Dorsolateral prefrontal cortex (tissue), 120 donors: ENCODE measurements at regions of chr6 and their contacts with region 1.

Region 1: GRCh38 chr6:73520688-73521350 is at the start of gene EEF1A1:
- DNase-seq: peak; percentile 96 to 100 (median 99)
- H3K4me3 ChIP-seq: peak within 1 kb of the TSS; percentile 64 to 100 (median 94)
- H3K27ac ChIP-seq: peak within 1 kb of the TSS; percentile 95 to 100 (median 100)
- H3K27me3 ChIP-seq: no peaks in the 10 kb centered on the region
- CTCF ChIP-seq: peak in 7 of 56 donors; percentile 2 to 25 (median 11)
- total RNA-seq, gene EEF1A1: 1,645 to 3,337 (median 2,206) TPM

Region 2: DNA sequence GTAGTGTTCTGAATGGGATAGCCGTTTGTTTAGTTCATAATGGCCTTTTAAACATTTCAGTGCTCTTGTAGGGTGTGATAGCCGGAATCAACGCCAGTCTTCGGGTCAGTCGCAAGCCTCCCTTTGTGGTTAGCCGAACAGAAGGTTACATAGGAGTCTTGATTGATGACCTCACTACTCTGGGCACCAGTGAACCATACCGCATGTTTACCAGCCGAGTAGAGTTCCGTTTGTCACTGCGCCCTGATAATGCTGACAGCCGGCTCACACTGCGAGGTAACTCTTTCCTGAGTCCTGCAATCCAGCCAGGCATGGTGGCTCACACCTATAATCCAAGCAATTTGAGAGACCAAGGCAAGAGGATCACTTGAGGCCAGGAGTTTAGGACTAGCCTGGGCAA is 38.9 kb before region 1 on chr6:
- intact Hi-C with region 1: no loop called
- DNase-seq: no peak
- H3K4me3 ChIP-seq: no peak overlapping the region
- H3K27ac ChIP-seq: no peak overlapping the region
- H3K27me3 ChIP-seq: no peaks in the 10 kb centered on the region
- CTCF ChIP-seq: no peak

Region 3: DNA sequence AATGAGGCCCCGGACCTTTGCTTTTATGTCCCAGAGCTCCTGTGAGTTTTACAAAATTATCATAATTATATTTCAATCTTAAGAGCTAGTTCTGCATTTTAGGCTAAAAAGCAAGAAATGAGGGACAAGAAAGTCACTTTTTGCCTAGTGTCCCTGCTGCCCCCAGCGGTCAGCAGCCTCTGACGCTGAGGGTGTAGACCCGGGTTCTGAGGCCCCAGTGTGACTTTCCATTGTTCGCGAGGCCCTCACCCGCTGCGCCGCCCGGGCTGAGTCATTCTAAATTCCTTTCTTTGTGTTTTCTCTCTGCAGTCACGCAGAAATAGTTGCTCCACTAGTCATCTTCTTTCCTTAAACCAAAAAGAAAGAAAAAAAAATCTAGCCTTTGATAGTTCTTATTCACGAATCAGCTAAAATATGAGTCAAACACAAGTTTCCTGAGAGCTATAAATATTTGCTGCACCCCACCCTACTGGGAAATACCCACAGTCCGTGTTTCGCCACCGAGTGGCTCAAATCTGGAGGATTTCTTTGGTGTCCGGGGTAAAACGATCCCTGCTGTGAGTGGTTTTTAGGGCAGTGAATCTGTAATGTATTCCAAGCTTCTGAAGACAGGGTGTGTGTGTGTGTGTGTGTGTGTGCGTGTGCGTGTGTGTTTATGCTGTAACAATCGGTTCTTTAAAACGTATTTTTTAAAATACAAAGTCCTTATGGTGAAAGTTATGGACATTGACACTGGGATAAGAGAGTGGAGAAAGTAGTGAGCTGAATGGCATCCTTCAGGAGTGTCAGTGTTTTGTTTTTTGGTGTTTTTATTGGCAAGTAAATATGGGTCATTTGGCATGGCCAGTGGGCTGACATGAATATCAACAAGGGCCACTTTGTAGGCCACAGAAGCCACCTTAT is 59.7 kb after region 1 on chr6:
- intact Hi-C with region 1: loop called (anchors 1 kb)
- DNase-seq: peak; percentile 17 to 89 (median 82)
- H3K4me3 ChIP-seq: peak overlapping the region in 58 of 59 donors; percentile 24 to 70 (median 46)
- H3K27ac ChIP-seq: peak overlapping the region; percentile 84 to 100 (median 96)
- H3K27me3 ChIP-seq: no peaks in the 10 kb centered on the region
- CTCF ChIP-seq: peak in 54 of 56 donors; percentile 29 to 78 (median 56)

Region 4: GRCh38 chr6:73653571-73654424 is 133.0 kb after region 1 on chr6 and contains the start of gene SLC17A5:
- intact Hi-C with region 1: loop called (anchors 1 to 2 kb)
- DNase-seq: peak; percentile 84 to 95 (median 93)
- H3K4me3 ChIP-seq: peak within 1 kb of the TSS; percentile 63 to 100 (median 97)
- H3K27ac ChIP-seq: peak within 1 kb of the TSS; percentile 74 to 99 (median 97)
- H3K27me3 ChIP-seq: no peaks in the 10 kb centered on the region
- CTCF ChIP-seq: peak in 32 of 56 donors; percentile 4 to 51 (median 29)
- total RNA-seq, gene SLC17A5: 10.8 to 27.7 (median 16.8) TPM